GM13976 (cell line): ENCODE measurements at regions of chr2 and their contacts with region 1.

Region 1: GRCh38 chr2:165401285-165401852 is 68.1 kb upstream of the CSRNP3 start:
- DNase-seq: no peak
- CTCF ChIP-seq: peak; percentile 52

Region 2: DNA sequence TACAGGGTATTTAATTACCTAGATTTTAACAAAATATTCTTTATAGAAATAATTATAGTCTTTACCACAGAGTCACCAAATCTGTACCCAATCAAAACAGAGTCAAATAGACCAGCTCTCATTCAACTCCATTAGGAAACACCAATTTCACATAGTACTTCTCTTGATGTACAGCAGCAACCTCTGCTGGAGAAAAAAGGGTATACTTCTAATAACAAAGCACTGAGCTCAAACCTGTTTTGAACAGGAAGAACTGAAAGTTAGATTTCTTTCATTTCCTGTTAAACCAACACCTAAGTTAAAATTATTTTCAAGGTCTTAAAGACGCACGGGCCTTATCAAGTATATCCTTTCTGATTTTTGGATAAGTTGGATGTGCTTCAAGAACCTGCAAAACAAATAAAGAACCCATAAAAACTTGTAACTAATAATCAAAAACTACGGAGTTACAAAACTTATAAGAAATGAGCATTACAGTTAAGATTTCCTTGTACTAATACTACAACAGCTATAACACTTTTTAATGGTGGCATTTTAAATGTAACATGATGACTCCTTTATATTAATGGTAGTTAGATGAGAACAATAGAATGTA is 473.2 kb after region 1 on chr2:
- in situ Hi-C with region 1: loop called (anchors 25 kb)
- DNase-seq: peak; percentile 50
- CTCF ChIP-seq: peak; percentile 64